IMR-90 (cell line): ENCODE measurements at regions of chr7 and their contacts with region 1.

Region 1: DNA sequence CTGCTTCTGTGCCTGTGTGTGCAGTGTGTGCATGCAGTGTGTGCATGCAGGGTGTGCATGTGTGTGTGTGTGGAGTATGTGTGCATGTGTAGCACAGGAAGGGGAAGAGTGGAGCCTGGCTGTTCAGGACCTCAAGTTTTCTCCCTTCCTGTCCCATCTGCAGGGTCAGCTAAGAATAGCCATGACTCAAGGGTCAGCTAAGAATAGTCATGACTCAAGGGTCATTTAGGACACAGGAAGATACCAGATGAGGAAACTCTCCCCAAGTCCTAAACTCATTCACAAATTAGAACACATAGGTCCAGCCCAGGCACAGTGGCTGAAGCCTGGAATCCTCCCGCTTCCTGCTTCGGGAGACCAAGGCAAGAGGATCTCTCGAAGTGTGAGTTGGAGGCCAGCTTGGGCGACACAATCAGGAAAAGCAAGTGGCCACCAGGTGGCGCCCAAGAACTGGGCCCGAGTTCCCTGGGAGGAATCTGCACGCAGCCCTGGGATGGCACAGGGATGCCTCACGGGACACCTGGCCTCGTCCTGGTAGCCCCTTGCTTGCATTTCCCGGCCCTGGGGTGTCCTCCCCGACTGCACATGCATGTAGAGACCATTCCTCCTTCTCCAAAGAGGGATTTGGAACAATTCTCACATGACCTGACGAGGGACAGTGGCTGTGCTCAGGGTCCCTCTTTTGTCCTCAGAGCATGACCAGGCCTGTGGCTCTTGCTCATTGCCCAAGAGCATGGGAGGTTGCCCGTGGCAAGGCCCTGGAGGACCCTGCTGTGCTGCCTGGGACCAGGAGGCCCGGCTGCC is 21.4 kb upstream of the VOPP1 start:
- DNase-seq: peak; percentile 77
- ATAC-seq: peak; percentile 65; the same call in 1 of the 2 replicates
- H3K4me3 ChIP-seq: no peak overlapping the region
- H3K27ac ChIP-seq: no peak overlapping the region
- H3K4me1 ChIP-seq: peaks cover 4% of the 10 kb centered on the region; the same call in 1 of the 2 replicates
- H3K27me3 ChIP-seq: no peaks in the 10 kb centered on the region; the same call in 1 of the 2 replicates
- CTCF ChIP-seq: peak; percentile 61
- POLR2A ChIP-seq: no peak
- RAD21 ChIP-seq: peak; percentile 51

Region 2: DNA sequence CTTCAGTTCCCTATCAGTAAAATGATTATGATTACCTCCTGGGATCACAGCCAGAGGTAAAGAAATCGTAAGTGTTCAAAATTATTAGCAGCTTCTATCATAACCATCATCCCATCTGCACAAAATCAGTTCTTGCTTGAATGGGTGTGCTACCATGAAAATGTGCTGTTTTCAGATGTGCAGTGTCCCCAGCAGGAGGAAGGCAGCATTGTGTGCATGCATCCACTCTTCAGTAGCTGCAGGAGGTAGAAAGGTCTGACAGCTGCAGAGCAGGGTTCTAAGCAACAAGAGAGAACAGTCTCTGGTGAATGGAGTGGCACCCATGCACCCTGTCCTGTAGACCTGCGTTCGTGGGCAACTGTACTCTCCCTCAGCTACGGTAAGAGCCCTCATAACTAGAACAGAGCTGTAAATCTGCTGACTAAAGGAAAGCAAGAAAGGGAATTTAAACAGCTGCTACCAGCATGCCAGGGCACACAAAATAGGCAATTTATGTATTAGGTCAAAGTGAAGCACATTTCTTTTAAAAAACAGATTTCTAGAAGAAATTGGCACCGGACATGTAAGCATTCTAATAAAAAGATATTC is 1030.3 kb before region 1 on chr7:
- CTCF ChIA-PET with region 1: no interaction called
- POLR2A ChIA-PET with region 1: no interaction called
- dilution Hi-C with region 1: no loop called
- in situ Hi-C with region 1: no loop called
- intact Hi-C with region 1: no loop called
- DNase-seq: no peak
- ATAC-seq: no peak
- H3K4me3 ChIP-seq: no peak overlapping the region
- H3K27ac ChIP-seq: no peak overlapping the region
- H3K4me1 ChIP-seq: no peaks in the 10 kb centered on the region
- H3K27me3 ChIP-seq: no peaks in the 10 kb centered on the region
- CTCF ChIP-seq: no peak
- POLR2A ChIP-seq: no peak
- RAD21 ChIP-seq: no peak

Region 3: DNA sequence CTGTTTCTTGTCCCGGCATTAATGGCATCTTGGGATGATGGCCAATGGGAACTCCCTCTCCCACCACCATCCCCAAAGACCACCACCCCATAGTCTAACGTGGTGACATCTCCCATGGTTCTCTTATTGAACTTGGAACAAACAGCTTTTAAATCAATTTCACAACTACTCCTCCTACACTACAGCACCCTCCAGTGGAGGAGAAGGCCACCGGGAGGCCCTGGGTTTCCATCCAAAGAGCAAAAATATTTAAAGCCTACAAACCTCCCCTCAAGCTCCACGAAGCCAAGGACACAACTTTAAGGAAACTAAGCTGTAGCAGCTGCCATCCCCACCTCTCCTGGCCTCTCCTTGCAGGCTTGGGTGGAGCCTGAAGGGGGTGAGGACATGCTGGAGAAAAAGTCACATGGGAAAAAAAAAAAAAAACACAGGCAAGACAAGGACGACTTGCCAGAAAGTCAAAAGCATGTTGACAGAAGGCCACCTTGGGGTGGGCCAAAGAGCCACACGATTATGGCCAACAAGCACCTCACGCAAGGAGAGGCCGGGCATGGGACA is 322.6 kb before region 1 on chr7:
- CTCF ChIA-PET with region 1: no interaction called
- POLR2A ChIA-PET with region 1: no interaction called
- dilution Hi-C with region 1: no loop called
- in situ Hi-C with region 1: loop called (anchors 10 kb)
- intact Hi-C with region 1: no loop called
- DNase-seq: peak; percentile 26
- ATAC-seq: peak; percentile 66
- H3K4me3 ChIP-seq: no peak overlapping the region
- H3K27ac ChIP-seq: no peak overlapping the region
- H3K4me1 ChIP-seq: peaks cover 2% of the 10 kb centered on the region; the same call in 1 of the 2 replicates
- H3K27me3 ChIP-seq: peaks cover 60% of the 10 kb centered on the region
- CTCF ChIP-seq: peak; percentile 63
- POLR2A ChIP-seq: no peak
- RAD21 ChIP-seq: peak; percentile 68

Region 4: GRCh38 chr7:55415173-55415778 is 178.4 kb before region 1 on chr7:
- CTCF ChIA-PET with region 1: no interaction called
- POLR2A ChIA-PET with region 1: no interaction called
- dilution Hi-C with region 1: no loop called
- in situ Hi-C with region 1: no loop called
- intact Hi-C with region 1: loop called (anchors 5 kb)
- DNase-seq: peak; percentile 65
- ATAC-seq: peak; percentile 98
- H3K4me3 ChIP-seq: no peak overlapping the region
- H3K27ac ChIP-seq: no peak overlapping the region
- H3K4me1 ChIP-seq: no peaks in the 10 kb centered on the region
- H3K27me3 ChIP-seq: no peaks in the 10 kb centered on the region
- CTCF ChIP-seq: peak; percentile 80
- POLR2A ChIP-seq: no peak
- RAD21 ChIP-seq: peak; percentile 76

Region 5: GRCh38 chr7:55432939-55433784 is 160.6 kb before region 1 on chr7:
- CTCF ChIA-PET with region 1: no interaction called
- POLR2A ChIA-PET with region 1: no interaction called
- dilution Hi-C with region 1: no loop called
- in situ Hi-C with region 1: loop called (anchors 5 kb)
- intact Hi-C with region 1: loop called (anchors 5 kb)
- DNase-seq: peak; percentile 59
- ATAC-seq: peak; percentile 70
- H3K4me3 ChIP-seq: no peak overlapping the region
- H3K27ac ChIP-seq: no peak overlapping the region
- H3K4me1 ChIP-seq: peaks cover 4% of the 10 kb centered on the region; the same call in 1 of the 2 replicates
- H3K27me3 ChIP-seq: no peaks in the 10 kb centered on the region
- CTCF ChIP-seq: peak; percentile 63
- POLR2A ChIP-seq: no peak
- RAD21 ChIP-seq: peak; percentile 71

Region 6: GRCh38 chr7:55438757-55439525 is 154.8 kb before region 1 on chr7:
- CTCF ChIA-PET with region 1: no interaction called
- POLR2A ChIA-PET with region 1: no interaction called
- dilution Hi-C with region 1: no loop called
- in situ Hi-C with region 1: loop called (anchors 5 kb)
- intact Hi-C with region 1: loop called (anchors 5 kb)
- DNase-seq: peak; percentile 37
- ATAC-seq: no peak
- H3K4me3 ChIP-seq: no peak overlapping the region
- H3K27ac ChIP-seq: no peak overlapping the region
- H3K4me1 ChIP-seq: peaks cover 11% of the 10 kb centered on the region
- H3K27me3 ChIP-seq: no peaks in the 10 kb centered on the region
- CTCF ChIP-seq: no peak
- POLR2A ChIP-seq: no peak
- RAD21 ChIP-seq: no peak